Head of caudate nucleus (tissue), 42 donors: ENCODE measurements at regions of chr1 and their contacts with region 1.

Region 1: GRCh38 chr1:224182866-224183590 is at the start of gene DEGS1:
- DNase-seq: peak; percentile 54 to 93 (median 85)

Region 2: GRCh38 chr1:224113918-224114786 is 68.9 kb before region 1 on chr1 and contains the start of gene FBXO28:
- intact Hi-C with region 1: loop called (anchors 2 kb)
- DNase-seq: peak; percentile 91 to 99 (median 98)

Region 3: GRCh38 chr1:224329842-224330753 is 147.1 kb after region 1 on chr1 and contains the start of gene NVL:
- intact Hi-C with region 1: loop called (anchors 2 kb)
- DNase-seq: peak; percentile 71 to 95 (median 88)

Region 4: GRCh38 chr1:224454397-224455066 is 271.5 kb after region 1 on chr1:
- intact Hi-C with region 1: loop called (anchors 10 kb)
- DNase-seq: peak in 24 of 42 donors; percentile 21 to 84 (median 49)